ENCODE measurements at regions of chr14 and their contacts with region 1.

Region 1: DNA sequence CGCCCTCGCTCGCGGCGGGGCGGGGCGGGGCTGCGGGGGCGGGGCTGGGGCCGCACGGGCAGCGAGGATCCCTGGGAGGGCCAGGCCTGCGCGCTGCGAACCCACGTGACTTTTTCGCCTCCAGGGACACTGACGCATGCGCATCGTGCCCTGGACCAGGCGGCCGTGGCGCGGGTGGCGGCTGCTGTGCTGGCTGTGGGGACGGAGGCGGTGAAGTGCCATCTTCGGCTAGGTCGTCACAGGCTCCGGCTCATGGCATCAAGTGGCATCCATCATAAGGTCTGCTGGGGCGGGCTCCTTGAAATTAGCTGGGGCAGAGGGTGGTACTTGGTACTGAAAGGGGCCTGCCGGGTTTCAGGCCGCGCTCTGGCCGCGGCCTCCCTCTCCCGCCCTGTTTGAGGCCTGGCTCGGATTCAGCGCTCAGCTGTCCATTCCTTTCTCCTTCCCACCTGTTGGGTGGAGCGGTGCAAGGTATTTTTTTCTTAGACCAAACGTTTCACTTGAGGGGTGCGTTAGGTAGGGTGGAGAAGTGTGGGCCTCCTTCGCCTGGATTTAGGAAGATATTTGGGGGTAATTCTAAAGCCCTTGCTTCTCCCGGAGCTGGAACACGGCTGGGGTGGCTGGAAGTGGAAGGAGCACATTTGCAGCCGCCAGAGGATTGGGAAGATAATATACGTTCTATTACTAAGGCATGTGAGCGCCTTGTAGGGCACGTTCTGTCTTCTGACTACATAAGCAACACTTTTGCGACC is at the start of gene PRPF39:
- DNase-seq: peak; percentile 88 to 98 (median 94)
- ATAC-seq: peak; percentile 91
- H3K4me3 ChIP-seq: peak within 1 kb of the TSS; percentile 78
- H3K4me3 Mint-ChIP-seq: peak within 1 kb of the TSS; percentile 98
- H3K27ac ChIP-seq: peak within 1 kb of the TSS; percentile 47 to 79
- H3K27ac Mint-ChIP-seq: peak within 1 kb of the TSS; percentile 89
- H3K4me1 ChIP-seq: peaks cover 25% of the 10 kb centered on the region
- H3K4me1 Mint-ChIP-seq: peaks cover 58% of the 10 kb centered on the region
- H3K27me3 ChIP-seq: no peaks in the 10 kb centered on the region
- H3K27me3 Mint-ChIP-seq: no peaks in the 10 kb centered on the region
- CTCF ChIP-seq: no peak
- total RNA-seq, gene PRPF39: 58.9 to 64.3 TPM

Region 2: GRCh38 chr14:44897045-44897844 is 186.9 kb before region 1 on chr14:
- CTCF ChIA-PET with region 1: no interaction called
- POLR2A ChIA-PET with region 1: interaction called, 11 read pairs
- intact Hi-C with region 1: loop called (anchors 2 kb)
- DNase-seq: peak; percentile 95 to 99 (median 98)
- ATAC-seq: peak; percentile 97
- H3K4me3 ChIP-seq: peak overlapping the region; percentile 69
- H3K4me3 Mint-ChIP-seq: peak overlapping the region; percentile 95
- H3K27ac ChIP-seq: peak overlapping the region; percentile 85
- H3K27ac Mint-ChIP-seq: peak overlapping the region; percentile 96
- H3K4me1 ChIP-seq: peaks cover 10% of the 10 kb centered on the region
- H3K4me1 Mint-ChIP-seq: peaks cover 39% of the 10 kb centered on the region
- H3K27me3 ChIP-seq: no peaks in the 10 kb centered on the region
- H3K27me3 Mint-ChIP-seq: no peaks in the 10 kb centered on the region
- CTCF ChIP-seq: no peak

Measured in CD4-positive, alpha-beta T cell (primary cell).